Cardiac septum (tissue), 1 donor: ENCODE measurements at regions of chr12 and their contacts with region 1.

Region 1: DNA sequence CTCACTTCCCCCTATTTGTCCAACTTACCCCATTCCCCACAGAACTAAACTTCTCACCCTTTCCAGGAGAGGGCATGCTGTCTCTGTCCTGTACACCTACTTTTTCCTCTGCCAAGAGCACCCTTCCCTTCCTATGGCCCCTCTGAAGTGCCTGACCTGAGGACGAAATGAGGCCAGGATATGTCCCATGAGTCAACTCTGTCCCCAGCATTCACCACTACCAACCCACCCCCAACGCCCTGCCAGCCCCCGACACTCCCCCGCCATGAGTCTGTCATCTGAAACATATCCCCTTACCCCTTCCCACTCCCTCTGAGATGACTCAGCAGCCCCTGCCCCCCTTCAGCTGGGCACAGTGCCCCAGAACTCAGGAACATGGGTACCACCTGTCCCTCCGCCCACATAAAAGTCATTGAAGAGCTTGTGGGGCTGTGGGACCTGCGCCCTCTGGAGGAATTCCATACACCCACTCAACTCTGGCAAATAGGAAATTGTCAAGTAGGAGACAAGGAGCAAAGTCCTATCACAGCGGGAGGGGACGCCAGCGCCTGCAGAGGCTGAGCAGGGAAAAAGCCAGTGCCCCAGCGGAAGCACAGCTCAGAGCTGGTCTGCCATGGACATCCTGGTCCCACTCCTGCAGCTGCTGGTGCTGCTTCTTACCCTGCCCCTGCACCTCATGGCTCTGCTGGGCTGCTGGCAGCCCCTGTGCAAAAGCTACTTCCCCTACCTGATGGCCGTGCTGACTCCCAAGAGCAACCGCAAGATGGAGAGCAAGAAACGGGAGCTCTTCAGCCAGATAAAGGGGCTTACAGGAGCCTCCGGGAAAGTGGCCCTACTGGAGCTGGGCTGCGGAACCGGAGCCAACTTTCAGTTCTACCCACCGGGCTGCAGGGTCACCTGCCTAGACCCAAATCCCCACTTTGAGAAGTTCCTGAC is 26.3 kb downstream of the ITGA7 start:
- DNase-seq: peak; percentile 82

Region 2: DNA sequence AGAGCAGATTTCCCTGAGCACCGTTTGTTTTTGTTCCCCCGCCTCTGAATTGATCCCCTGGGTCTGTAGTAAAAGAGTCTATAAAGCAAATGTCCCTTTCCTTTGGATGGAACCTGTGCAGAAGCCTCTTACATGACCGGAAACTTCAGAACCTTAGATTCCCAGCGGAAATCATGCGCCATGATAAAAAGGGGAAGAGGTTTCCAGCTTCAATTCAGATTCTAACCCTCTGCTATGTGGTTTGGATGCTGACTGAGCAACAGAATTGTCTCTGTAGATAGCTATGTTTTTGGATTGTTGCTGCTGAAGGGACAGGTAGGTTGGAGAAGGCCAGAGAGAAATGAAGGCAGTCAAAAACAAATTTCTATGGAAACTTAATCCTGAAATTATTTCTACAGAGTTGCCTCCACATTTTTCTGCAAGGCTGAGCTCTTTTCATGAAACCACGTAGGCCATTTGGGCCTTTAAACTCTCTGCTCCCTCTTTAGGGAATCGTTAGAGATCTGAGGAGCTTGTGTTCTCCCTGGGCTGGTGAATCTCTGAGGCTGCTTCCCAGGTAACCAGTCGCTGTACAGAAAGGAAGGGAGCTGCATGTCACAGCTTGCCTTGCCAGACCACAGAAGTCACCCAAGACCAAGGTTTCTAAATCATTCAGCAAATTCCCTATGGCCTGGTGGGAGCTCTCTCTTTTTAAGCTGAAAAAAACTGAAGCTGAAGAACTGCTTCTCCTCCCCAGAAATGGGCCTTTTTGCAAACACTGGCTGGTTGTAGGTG is 73.4 kb before region 1 on chr12:
- intact Hi-C with region 1: no loop called
- DNase-seq: no peak

Region 3: GRCh38 chr12:55700255-55701018 is 19.0 kb after region 1 on chr12:
- intact Hi-C with region 1: loop called (anchors 2 kb)
- DNase-seq: peak; percentile 76